AG04450 (cell line): ENCODE measurements at regions of chr10 and their contacts with region 1.

Region 1: DNA sequence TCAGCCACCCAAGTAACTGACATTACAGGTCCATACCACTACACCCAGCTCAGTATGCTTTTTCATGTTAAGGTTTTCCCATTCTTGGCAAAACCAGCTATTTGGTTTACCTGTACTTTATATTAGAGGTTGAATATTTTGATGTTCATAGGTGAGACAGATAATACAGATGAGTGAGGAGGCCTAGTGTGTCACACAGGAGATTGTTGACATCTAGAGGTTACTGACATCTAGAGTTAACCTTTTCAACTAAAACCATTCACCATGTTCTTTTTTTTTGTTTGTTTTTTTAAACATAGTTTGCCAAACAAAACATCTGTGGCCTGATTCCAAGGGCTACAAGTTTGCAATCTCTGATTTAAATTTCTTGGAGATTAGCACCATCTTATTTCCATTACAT is 8.0 kb downstream of the GHITM start:
- DNase-seq: no peak
- H3K4me3 ChIP-seq: no peak overlapping the region
- H3K27ac ChIP-seq: no peak overlapping the region
- H3K27me3 ChIP-seq: no peaks in the 10 kb centered on the region
- CTCF ChIP-seq: no peak

Region 2: GRCh38 chr10:83862723-83863122 is 284.6 kb before region 1 on chr10:
- CTCF ChIA-PET with region 1: no interaction called
- POLR2A ChIA-PET with region 1: no interaction called
- DNase-seq: no peak
- H3K4me3 ChIP-seq: no peak overlapping the region
- H3K27ac ChIP-seq: no peak overlapping the region
- H3K27me3 ChIP-seq: no peaks in the 10 kb centered on the region
- CTCF ChIP-seq: no peak

Region 3: DNA sequence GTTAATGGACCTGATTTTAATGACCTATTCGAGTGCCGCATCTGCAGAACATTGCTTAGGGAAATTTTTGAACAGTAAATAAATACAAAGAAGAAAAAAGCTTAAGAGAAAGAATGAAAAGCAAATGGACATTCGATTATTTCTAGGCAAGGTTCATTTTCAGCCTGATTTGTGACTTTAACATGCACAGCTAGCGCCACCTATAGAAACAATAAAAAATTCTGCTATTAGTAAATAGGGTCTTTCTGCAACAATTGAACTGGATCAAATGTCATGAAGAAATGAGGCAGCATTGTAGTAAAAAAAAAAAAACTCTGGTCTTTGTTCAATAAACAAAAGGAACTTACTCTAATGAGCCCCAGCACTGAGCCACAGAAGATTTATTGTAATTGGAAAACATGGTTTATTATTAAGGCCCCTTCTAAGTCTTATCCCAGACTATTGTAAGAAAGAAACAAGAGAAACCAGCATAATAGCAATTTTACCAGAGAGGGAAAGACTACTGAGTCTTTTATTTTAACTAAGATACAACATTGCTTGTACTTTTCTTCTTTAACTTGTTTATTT is 49.5 kb before region 1 on chr10:
- CTCF ChIA-PET with region 1: no interaction called
- POLR2A ChIA-PET with region 1: no interaction called
- DNase-seq: no peak
- H3K4me3 ChIP-seq: no peak overlapping the region
- H3K27ac ChIP-seq: no peak overlapping the region
- H3K27me3 ChIP-seq: peaks cover under 1% of the 10 kb centered on the region
- CTCF ChIP-seq: peak; percentile 58

Region 4: DNA sequence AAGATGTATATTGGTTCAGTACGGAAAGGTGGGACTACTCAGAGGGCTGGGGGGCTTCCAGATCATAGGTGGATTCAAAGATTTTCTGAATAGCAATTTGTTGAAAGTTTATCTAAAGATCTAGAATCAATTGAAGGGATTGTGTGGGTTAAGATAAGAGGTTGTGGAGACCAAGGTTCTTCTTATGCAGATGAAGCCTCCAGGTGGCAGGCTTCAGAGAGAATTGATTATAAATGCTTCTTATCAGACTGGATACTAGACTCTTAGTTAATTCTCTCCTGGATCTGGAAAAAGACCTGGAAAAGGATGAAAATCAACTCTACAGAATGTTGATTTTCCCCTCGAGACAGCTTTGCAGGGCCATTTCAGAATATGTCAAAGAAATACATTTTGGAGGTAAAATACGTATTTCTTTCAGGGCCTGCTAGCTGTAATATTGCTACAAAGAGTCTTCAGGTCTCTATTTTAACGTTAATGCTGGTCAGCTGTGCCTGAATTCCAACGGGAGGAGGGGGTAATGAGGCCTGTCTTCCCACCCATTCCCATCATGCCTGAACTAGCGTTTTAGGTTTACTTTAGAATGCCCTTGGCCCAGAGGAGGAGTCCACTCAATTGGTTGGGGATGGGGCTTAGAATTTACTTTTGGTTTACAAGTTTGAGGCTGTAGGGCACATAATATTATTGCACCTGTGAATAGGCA is 13.5 kb after region 1 on chr10:
- CTCF ChIA-PET with region 1: interaction called, 19 read pairs
- POLR2A ChIA-PET with region 1: no interaction called
- DNase-seq: no peak
- H3K4me3 ChIP-seq: no peak overlapping the region
- H3K27ac ChIP-seq: no peak overlapping the region
- H3K27me3 ChIP-seq: peaks cover 3% of the 10 kb centered on the region
- CTCF ChIP-seq: no peak

Region 5: GRCh38 chr10:84172467-84173356 is 25.4 kb after region 1 on chr10:
- CTCF ChIA-PET with region 1: no interaction called
- POLR2A ChIA-PET with region 1: no interaction called
- DNase-seq: no peak
- H3K4me3 ChIP-seq: no peak overlapping the region
- H3K27ac ChIP-seq: no peak overlapping the region
- H3K27me3 ChIP-seq: no peaks in the 10 kb centered on the region
- CTCF ChIP-seq: no peak

Region 6: DNA sequence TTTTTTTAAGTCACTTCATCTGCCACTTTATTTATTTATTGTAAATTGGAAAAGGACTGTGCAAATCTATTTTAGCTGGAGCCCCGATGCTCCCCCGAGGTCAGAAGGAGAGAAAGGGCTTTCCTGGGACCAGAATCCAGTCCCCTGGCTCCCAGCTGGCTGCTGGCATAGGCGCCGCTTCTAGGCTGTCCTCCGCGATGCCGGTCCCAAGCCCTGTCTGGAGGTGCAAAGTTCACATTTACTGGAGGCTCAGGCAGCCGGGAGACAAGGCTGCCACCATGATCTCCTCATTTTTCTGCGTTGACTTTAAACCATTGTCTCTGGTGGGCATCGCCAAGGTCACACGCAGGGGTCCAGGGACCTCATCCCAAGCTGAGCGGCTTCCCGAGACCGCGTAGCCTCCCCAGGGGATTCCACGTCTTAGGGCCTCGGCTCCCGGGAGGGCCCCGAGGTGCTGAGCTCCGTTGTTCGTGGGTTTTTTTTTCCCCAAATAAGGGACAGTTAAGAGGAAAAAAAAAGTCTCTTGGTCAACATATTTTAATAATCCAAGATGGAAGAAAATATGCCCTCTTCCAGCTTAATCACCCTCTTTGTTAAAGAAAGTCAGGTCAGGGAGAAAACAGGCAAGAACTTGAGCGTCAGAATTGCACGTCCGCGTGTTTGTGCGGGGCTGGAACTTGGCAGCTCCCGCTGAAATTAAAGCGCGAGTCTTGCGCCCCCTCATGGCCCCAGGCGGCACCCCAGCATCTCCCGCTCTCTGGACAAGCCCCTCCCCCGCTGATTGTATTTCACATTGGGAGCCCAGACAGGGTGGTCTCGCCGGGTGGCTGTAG is 109.4 kb after region 1 on chr10:
- CTCF ChIA-PET with region 1: interaction called, 34 read pairs
- POLR2A ChIA-PET with region 1: no interaction called
- DNase-seq: no peak
- H3K4me3 ChIP-seq: no peak overlapping the region
- H3K27ac ChIP-seq: no peak overlapping the region
- H3K27me3 ChIP-seq: peaks cover 4% of the 10 kb centered on the region
- CTCF ChIP-seq: peak; percentile 76